ENCODE measurements at regions of chr4 and their contacts with region 1.

Region 1: GRCh38 chr4:180148737-180149136 is 2094.5 kb upstream of the TENM3 start:
- DNase-seq: no peak
- ATAC-seq: no peak
- H3K4me3 ChIP-seq: no peak overlapping the region
- H3K4me3 Mint-ChIP-seq: no peak overlapping the region
- H3K27ac ChIP-seq: no peak overlapping the region
- H3K27ac Mint-ChIP-seq: no peak overlapping the region
- H3K4me1 ChIP-seq: no peaks in the 10 kb centered on the region
- H3K4me1 Mint-ChIP-seq: no peaks in the 10 kb centered on the region
- H3K27me3 ChIP-seq: no peaks in the 10 kb centered on the region
- H3K27me3 Mint-ChIP-seq: no peaks in the 10 kb centered on the region

Region 2: GRCh38 chr4:178185517-178185916 is 1963.2 kb before region 1 on chr4:
- CTCF ChIA-PET with region 1: no interaction called
- POLR2A ChIA-PET with region 1: no interaction called
- intact Hi-C with region 1: no loop called
- DNase-seq: no peak
- ATAC-seq: no peak
- H3K4me3 ChIP-seq: no peak overlapping the region
- H3K4me3 Mint-ChIP-seq: no peak overlapping the region
- H3K27ac ChIP-seq: no peak overlapping the region
- H3K27ac Mint-ChIP-seq: no peak overlapping the region
- H3K4me1 ChIP-seq: no peaks in the 10 kb centered on the region
- H3K4me1 Mint-ChIP-seq: no peaks in the 10 kb centered on the region
- H3K27me3 ChIP-seq: no peaks in the 10 kb centered on the region
- H3K27me3 Mint-ChIP-seq: no peaks in the 10 kb centered on the region

Region 3: GRCh38 chr4:180105362-180105761 is 43.4 kb before region 1 on chr4:
- CTCF ChIA-PET with region 1: no interaction called
- POLR2A ChIA-PET with region 1: no interaction called
- intact Hi-C with region 1: loop called in 1 of 2 experiments (anchors 1 kb)
- DNase-seq: no peak
- ATAC-seq: no peak
- H3K4me3 ChIP-seq: no peak overlapping the region
- H3K4me3 Mint-ChIP-seq: no peak overlapping the region
- H3K27ac ChIP-seq: no peak overlapping the region
- H3K27ac Mint-ChIP-seq: no peak overlapping the region
- H3K4me1 ChIP-seq: no peaks in the 10 kb centered on the region
- H3K4me1 Mint-ChIP-seq: no peaks in the 10 kb centered on the region
- H3K27me3 ChIP-seq: no peaks in the 10 kb centered on the region
- H3K27me3 Mint-ChIP-seq: no peaks in the 10 kb centered on the region